Left ventricle myocardium superior (tissue), 1 donor: ENCODE measurements at regions of chr2 and their contacts with region 1.

Region 1: GRCh38 chr2:75403991-75404428 is 156.7 kb downstream of the EVA1A start:
- DNase-seq: no peak
- ATAC-seq: peak; percentile 40

Region 2: GRCh38 chr2:74602586-74603281 is 801.3 kb before region 1 on chr2:
- intact Hi-C with region 1: no loop called
- DNase-seq: no peak
- ATAC-seq: no peak

Region 3: GRCh38 chr2:74919827-74920226 is 484.2 kb before region 1 on chr2:
- intact Hi-C with region 1: loop called (anchors 5 kb)
- DNase-seq: peak; percentile 78
- ATAC-seq: peak; percentile 52

Region 4: DNA sequence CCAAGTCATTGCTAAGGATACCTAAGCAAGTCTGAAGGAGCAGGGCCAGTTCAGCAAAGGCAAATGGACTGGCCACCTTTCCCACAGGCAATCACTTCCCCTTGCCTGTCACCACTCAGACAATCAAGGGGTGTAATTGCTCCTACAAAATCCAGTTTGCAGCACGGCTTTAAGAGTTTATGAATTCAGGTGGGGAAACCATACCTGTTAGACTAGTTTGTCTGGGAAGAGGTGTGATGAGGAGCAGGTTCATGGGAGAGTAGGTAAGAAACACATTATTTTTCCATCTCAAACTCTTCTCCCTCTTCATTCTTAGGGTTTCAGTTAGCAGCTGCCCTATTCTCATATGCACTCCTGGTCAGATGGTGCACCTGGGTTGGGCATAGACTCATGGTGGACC is 54.2 kb after region 1 on chr2:
- intact Hi-C with region 1: no loop called
- DNase-seq: no peak
- ATAC-seq: no peak